ENCODE measurements at regions of chr13 and their contacts with region 1.

Region 1: DNA sequence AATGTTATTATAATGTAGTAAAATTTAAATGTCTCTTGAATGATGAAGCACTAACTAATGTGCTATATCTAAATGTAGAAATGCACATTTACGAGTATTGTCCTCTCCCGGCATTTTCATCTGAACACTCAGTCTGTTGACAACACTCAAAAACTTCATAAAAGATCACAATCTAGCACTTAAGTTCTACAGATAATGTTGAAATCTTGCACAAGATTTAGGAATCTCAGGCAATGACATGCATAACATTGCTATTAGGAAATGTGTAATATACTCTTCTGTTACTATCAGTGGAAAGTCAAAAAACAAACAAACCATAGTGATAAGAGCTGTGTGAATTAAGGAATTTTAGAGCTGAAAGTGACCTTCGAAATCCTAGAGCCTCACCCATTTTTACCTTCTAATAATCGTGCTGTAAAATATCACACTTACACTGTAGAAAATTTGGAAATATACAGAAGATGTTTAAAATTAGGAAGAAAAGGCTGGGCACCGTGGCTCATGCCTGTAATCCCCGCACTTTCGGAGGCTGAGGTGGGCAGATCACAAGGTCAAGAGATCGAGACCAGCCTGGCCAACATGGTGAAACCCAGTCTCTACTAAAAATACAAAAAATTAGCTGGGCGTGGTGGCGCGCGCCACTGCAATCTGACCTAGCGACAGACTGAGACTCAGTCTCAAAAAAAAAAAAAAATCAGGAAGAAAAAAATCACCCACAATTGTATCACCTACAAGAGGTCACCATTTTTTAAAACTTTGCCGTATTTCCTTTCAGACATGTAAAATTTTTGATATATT is 37.7 kb upstream of the XPO4 start:
- DNase-seq: no peak
- H3K4me3 ChIP-seq: no peak overlapping the region
- H3K27ac ChIP-seq: no peak overlapping the region
- H3K4me1 ChIP-seq: no peaks in the 10 kb centered on the region
- H3K27me3 ChIP-seq: no peaks in the 10 kb centered on the region
- CTCF ChIP-seq: no peak

Region 2: GRCh38 chr13:20860844-20861243 is 79.4 kb before region 1 on chr13:
- intact Hi-C with region 1: no loop called
- DNase-seq: no peak
- H3K4me3 ChIP-seq: no peak overlapping the region
- H3K27ac ChIP-seq: no peak overlapping the region
- H3K4me1 ChIP-seq: no peaks in the 10 kb centered on the region
- H3K27me3 ChIP-seq: no peaks in the 10 kb centered on the region
- CTCF ChIP-seq: no peak

Region 3: DNA sequence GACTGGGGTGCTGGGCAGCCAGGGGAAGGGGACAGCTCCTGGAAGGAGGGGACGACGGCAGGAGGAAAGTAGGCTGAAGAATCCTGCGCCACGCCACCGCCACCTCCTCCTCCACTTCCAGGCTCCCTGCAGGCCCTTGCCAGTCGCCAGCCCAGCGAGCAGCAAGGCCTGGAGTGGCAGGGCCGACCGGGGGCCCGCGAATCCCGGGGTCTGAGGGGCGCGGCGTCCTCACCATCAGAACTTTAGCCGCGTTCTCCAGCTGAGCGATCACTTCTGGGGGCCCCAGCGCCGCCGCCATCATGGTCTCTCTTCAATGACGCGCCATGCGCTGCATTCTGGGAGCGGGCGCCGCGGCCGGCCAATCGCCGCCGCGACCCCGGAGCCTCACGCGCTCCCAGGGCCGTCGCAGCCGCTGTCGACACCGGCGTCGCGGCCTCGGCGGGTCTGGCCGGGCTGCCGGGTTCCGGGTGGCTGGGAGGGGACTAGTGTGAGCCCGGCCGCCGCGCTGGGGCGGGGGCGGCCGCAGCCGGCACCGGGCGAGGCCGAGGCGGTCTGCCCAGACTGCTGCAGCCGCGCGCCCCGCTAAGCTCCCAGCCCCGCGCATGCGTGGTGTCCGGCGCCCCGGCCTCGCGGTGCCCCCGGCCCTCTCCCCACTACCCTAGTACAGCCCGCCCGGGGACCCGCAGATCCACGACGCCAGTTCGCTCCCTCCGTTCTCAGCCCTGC is 37.7 kb before region 1 on chr13 and contains the start of gene XPO4:
- intact Hi-C with region 1: loop called (anchors 1 kb)
- DNase-seq: peak; percentile 16 to 88
- H3K4me3 ChIP-seq: peak within 1 kb of the TSS; percentile 81 to 88
- H3K27ac ChIP-seq: peak within 1 kb of the TSS; percentile 93
- H3K4me1 ChIP-seq: peaks cover 3 to 10% of the 10 kb centered on the region in 2 donors
- H3K27me3 ChIP-seq: no peaks in the 10 kb centered on the region
- CTCF ChIP-seq: no peak
- total RNA-seq, gene XPO4: 5.1 TPM

Region 4: DNA sequence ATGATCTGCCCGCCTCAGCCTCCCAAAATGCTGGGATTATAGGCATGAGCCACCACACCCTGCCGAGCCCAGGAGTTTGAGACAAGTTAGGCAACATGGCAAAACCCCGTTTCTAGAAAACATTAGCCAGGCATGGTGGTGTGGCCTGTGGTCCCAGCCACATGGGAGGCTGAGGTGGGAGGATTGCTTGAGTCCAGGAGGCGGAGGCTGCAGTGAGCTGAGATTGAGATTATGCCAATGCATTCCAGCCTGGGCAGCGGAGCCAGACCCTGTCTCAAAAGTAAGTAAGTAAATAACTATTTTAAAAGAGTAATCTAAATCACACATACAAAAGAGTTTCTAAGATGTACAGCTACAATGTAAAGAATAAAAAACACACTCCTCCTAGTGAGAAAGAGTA is 194.2 kb after region 1 on chr13:
- intact Hi-C with region 1: loop called (anchors 1 kb)
- DNase-seq: no peak
- H3K4me3 ChIP-seq: no peak overlapping the region
- H3K27ac ChIP-seq: no peak overlapping the region
- H3K4me1 ChIP-seq: peaks cover 0 to under 1% of the 10 kb centered on the region in 2 donors
- H3K27me3 ChIP-seq: no peaks in the 10 kb centered on the region
- CTCF ChIP-seq: no peak

Region 5: GRCh38 chr13:21176220-21176982 is 236.1 kb after region 1 on chr13 and contains the starts of genes MRPL57 and SKA3:
- intact Hi-C with region 1: loop called (anchors 5 kb)
- DNase-seq: peak; percentile 64 to 93
- H3K4me3 ChIP-seq: peak within 1 kb of the TSS; percentile 82 to 89
- H3K27ac ChIP-seq: peak within 1 kb of the TSS; percentile 94 to 95
- H3K4me1 ChIP-seq: peaks cover 0 to 6% of the 10 kb centered on the region in 2 donors
- H3K27me3 ChIP-seq: no peaks in the 10 kb centered on the region
- CTCF ChIP-seq: peak; percentile 9 to 45 (median 19)
- total RNA-seq, gene MRPL57: 36.7 TPM
- total RNA-seq, gene SKA3: not detected

Region 6: GRCh38 chr13:21476893-21477472 is 536.7 kb after region 1 on chr13:
- intact Hi-C with region 1: loop called (anchors 2 kb)
- DNase-seq: peak in 1 of 2 donors; percentile 87
- H3K4me3 ChIP-seq: peak overlapping the region; percentile 24 to 53
- H3K27ac ChIP-seq: no peak overlapping the region
- H3K4me1 ChIP-seq: peaks cover 0 to 4% of the 10 kb centered on the region in 2 donors
- H3K27me3 ChIP-seq: no peaks in the 10 kb centered on the region
- CTCF ChIP-seq: peak; percentile 80 to 93 (median 90)